Uterus (tissue), 4 donors: ENCODE measurements at regions of chr4 and their contacts with region 1.

Region 1: GRCh38 chr4:41214136-41214824 is at the start of gene APBB2:
- DNase-seq: peak; percentile 95
- H3K4me3 ChIP-seq: peak within 1 kb of the TSS; percentile 71 to 74
- H3K27ac ChIP-seq: peak within 1 kb of the TSS; percentile 82 to 87
- H3K4me1 ChIP-seq: no peaks in the 10 kb centered on the region
- H3K27me3 ChIP-seq: no peaks in the 10 kb centered on the region
- CTCF ChIP-seq: peak; percentile 54 to 97 (median 84)
- POLR2A ChIP-seq: peak; percentile 88 to 89
- total RNA-seq, gene APBB2: 32.4 to 133 (median 92.1) TPM

Region 2: DNA sequence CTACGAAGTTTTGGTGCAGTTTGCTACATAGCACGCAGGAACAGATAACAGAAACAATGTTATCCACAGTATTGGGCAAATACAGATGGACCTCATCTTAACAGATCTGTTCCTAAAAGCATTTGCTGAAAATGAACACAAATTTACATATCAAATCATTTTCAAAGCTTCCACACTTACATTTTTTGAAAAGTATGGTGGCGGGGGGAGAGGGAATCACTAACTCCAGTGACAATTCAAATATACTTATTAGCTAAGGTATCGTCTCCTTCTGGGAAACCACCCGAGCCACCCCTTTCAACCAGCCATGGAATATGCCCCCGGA is 289.5 kb before region 1 on chr4:
- intact Hi-C with region 1: loop called (anchors 5 kb)
- DNase-seq: no peak
- H3K4me3 ChIP-seq: no peak overlapping the region
- H3K27ac ChIP-seq: no peak overlapping the region
- H3K4me1 ChIP-seq: no peaks in the 10 kb centered on the region
- H3K27me3 ChIP-seq: no peaks in the 10 kb centered on the region
- CTCF ChIP-seq: no peak
- POLR2A ChIP-seq: no peak

Region 3: GRCh38 chr4:40976343-40976742 is 237.9 kb before region 1 on chr4:
- intact Hi-C with region 1: loop called (anchors 5 kb)
- DNase-seq: peak in 1 of 2 donors; percentile 73
- H3K4me3 ChIP-seq: no peak overlapping the region
- H3K27ac ChIP-seq: no peak overlapping the region
- H3K4me1 ChIP-seq: no peaks in the 10 kb centered on the region
- H3K27me3 ChIP-seq: no peaks in the 10 kb centered on the region
- CTCF ChIP-seq: peak; percentile 68 to 78 (median 73)
- POLR2A ChIP-seq: no peak